Lower leg skin (tissue), 4 donors: ENCODE measurements at regions of chr7 and their contacts with region 1.

Region 1: DNA sequence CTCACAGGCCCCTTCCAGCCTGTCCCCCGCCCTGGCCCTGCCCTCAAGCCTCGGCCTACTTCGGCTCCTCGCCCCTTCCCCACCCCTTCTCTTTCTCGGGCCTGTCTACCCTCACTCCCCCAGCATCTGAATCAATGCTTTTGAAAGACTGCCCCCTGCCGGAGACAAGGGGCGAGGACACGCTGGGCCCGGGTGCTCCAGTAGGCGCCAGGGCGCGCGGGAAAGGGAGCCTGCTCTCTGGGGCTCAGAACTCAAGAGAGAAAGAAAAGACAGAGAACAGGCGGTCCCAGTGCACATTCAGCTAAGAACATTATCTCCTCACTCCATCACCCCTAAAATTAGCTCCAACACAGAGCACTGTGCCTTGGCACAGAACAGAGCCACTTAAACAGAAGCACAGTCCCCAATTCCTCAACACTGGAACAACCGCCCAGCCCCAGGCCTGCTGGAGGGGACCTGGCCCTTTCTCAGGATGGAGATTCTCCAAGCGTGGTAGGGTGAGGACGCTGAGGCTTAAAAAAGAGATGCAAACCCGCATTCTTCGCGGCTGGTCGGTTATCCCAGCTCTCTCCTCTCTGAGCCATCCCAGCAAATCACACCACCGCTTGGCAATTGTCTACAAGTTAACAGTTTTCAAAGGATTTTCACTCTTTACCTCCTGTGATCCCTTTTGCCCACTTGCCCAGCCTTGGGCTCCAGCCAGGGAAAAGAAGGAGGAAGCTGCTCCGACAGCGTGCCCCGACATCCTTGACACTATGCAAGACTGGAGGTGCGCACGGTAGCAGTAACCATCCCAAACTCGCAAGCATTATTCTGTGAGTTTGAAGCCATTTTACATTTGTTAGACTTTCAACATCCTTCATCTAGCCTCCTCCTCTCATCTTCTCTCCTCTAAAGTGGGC is 2.1 kb downstream of the GIGYF1 start:
- DNase-seq: peak; percentile 64 to 96
- H3K4me3 ChIP-seq: no peak overlapping the region
- CTCF ChIP-seq: peak in 1 of 3 donors; percentile 69
- POLR2A ChIP-seq: no peak

Region 2: GRCh38 chr7:100483101-100483721 is 208.7 kb before region 1 on chr7:
- intact Hi-C with region 1: loop called (anchors 5 kb)
- DNase-seq: peak in 1 of 2 donors; percentile 91
- H3K4me3 ChIP-seq: peak overlapping the region; percentile 9
- CTCF ChIP-seq: peak in 1 of 3 donors; percentile 15
- POLR2A ChIP-seq: no peak